Thyroid gland (tissue), 4 donors: ENCODE measurements at regions of chr4 and their contacts with region 1.

Region 1: DNA sequence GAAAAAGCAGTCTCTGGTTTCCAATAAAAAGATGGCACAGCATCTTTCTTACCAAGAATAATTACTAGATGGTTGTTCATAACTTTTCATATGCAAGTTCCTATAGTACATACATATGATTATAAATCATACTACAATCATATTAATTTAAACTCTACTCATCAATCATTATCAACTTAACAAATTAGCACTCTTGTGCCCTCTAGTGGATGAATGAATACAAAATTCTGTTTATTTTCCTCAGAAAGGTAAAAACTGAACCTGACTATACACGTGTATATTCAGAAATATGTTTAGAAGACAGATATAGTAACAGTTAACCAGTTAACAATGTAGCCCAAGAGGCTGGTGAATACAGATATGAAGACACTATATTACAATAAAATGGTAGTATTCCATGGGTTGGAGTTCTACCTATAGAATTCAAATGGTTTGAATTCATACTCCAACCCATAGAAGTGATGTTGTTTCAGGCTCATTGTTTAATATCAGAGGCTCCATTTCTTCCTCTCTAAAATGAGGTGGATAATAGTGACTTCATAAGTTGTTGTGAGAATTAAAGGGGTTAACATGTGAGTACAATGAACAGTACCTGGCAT is 100.0 kb downstream of the ADAMTS3 start:
- DNase-seq: no peak
- H3K4me3 ChIP-seq: no peak overlapping the region
- H3K27ac ChIP-seq: no peak overlapping the region
- H3K4me1 ChIP-seq: peaks cover 0 to 2% of the 10 kb centered on the region in 2 donors
- H3K27me3 ChIP-seq: peaks cover 3% of the 10 kb centered on the region
- CTCF ChIP-seq: peak in 3 of 6 experiments; percentile 55 to 68 (median 62)
- POLR2A ChIP-seq: no peak

Region 2: GRCh38 chr4:72326692-72327632 is 142.0 kb before region 1 on chr4:
- intact Hi-C with region 1: loop called (anchors 10 kb)
- DNase-seq: no peak
- H3K4me3 ChIP-seq: no peak overlapping the region
- H3K27ac ChIP-seq: no peak overlapping the region
- H3K4me1 ChIP-seq: no peaks in the 10 kb centered on the region
- H3K27me3 ChIP-seq: no peaks in the 10 kb centered on the region
- CTCF ChIP-seq: peak in 5 of 6 experiments; percentile 24 to 68 (median 62)
- POLR2A ChIP-seq: no peak